PC-9 (cell line): ENCODE measurements at regions of chr16 and their contacts with region 1.

Region 1: DNA sequence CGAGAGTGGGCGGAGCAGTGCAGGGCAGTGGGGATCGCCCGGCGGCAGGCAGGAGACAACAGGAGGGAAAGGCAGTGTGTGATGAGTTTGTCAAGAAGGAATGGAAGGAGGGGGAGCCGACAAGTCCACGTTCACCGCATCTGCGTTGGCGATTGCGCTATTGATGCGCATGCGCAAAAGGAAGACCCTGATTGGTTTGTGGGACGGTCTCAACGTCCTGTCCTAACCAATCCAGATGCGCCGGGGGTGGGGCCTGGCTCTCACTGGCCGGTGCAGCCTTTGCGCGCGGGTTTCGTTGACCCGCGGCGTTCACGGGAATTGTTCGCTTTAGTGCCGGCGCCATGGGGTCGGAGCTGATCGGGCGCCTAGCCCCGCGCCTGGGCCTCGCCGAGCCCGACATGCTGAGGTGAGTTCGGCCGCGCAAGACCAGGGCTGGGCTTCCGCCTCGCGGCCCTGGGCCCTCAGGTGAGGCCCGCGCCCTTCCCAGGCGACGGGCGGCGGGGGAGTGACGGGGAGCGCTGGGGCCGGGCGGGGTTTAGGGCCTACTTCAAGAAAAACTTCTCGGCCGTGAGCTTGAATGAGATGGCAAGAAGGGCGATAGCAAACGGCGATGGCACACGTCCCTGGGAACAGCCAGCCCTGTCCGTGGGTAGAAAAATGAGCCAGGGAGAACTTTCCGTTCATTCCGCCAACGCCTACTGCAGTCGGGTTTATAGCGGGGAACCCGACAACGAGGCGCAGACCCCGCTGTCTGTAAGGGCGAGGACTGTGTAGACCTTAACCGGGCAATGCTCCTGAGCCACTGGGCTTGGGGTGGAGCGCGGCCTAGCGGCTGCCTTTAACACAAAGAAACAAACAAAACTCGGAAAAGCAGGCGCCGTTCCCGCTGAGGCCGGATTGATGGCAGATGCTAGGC is at the start of gene ORC6:
- DNase-seq: peak; percentile 90 to 95
- H3K4me3 ChIP-seq: peak within 1 kb of the TSS; percentile 73
- H3K27ac ChIP-seq: peak within 1 kb of the TSS; percentile 74
- H3K4me1 ChIP-seq: peaks cover 34% of the 10 kb centered on the region
- H3K27me3 ChIP-seq: no peaks in the 10 kb centered on the region
- CTCF ChIP-seq: peak; percentile 61; the same call in 1 of the 2 replicates
- total RNA-seq, gene ORC6: 27.4 and 36.0 TPM in 2 replicates

Region 2: GRCh38 chr16:46757339-46758050 is 67.9 kb after region 1 on chr16:
- CTCF ChIA-PET with region 1: no interaction called
- POLR2A ChIA-PET with region 1: no interaction called
- intact Hi-C with region 1: loop called (anchors 5 kb)
- DNase-seq: peak in 1 of 2 experiments; percentile 75
- H3K4me3 ChIP-seq: no peak overlapping the region
- H3K27ac ChIP-seq: no peak overlapping the region
- H3K4me1 ChIP-seq: peaks cover 4% of the 10 kb centered on the region; the same call in 1 of the 2 replicates
- H3K27me3 ChIP-seq: peaks cover 19% of the 10 kb centered on the region; the same call in 1 of the 2 replicates
- CTCF ChIP-seq: no peak

Region 3: GRCh38 chr16:46801428-46802049 is 111.9 kb after region 1 on chr16:
- CTCF ChIA-PET with region 1: interaction called, 4 read pairs
- POLR2A ChIA-PET with region 1: no interaction called
- intact Hi-C with region 1: loop called (anchors 5 kb)
- DNase-seq: no peak
- H3K4me3 ChIP-seq: no peak overlapping the region
- H3K27ac ChIP-seq: no peak overlapping the region
- H3K4me1 ChIP-seq: no peaks in the 10 kb centered on the region
- H3K27me3 ChIP-seq: no peaks in the 10 kb centered on the region
- CTCF ChIP-seq: peak; percentile 68

Region 4: GRCh38 chr16:46830902-46831647 is 141.5 kb after region 1 on chr16 and contains the start of gene C16orf87:
- CTCF ChIA-PET with region 1: no interaction called
- POLR2A ChIA-PET with region 1: interaction called, 23 read pairs
- intact Hi-C with region 1: loop called (anchors 1 kb)
- DNase-seq: peak; percentile 79 to 91
- H3K4me3 ChIP-seq: peak within 1 kb of the TSS; percentile 60
- H3K27ac ChIP-seq: peak within 1 kb of the TSS; percentile 26
- H3K4me1 ChIP-seq: peaks cover 17% of the 10 kb centered on the region; the same call in 1 of the 2 replicates
- H3K27me3 ChIP-seq: no peaks in the 10 kb centered on the region
- CTCF ChIP-seq: no peak
- total RNA-seq, gene C16orf87: 7.8 and 8.6 TPM in 2 replicates

Region 5: DNA sequence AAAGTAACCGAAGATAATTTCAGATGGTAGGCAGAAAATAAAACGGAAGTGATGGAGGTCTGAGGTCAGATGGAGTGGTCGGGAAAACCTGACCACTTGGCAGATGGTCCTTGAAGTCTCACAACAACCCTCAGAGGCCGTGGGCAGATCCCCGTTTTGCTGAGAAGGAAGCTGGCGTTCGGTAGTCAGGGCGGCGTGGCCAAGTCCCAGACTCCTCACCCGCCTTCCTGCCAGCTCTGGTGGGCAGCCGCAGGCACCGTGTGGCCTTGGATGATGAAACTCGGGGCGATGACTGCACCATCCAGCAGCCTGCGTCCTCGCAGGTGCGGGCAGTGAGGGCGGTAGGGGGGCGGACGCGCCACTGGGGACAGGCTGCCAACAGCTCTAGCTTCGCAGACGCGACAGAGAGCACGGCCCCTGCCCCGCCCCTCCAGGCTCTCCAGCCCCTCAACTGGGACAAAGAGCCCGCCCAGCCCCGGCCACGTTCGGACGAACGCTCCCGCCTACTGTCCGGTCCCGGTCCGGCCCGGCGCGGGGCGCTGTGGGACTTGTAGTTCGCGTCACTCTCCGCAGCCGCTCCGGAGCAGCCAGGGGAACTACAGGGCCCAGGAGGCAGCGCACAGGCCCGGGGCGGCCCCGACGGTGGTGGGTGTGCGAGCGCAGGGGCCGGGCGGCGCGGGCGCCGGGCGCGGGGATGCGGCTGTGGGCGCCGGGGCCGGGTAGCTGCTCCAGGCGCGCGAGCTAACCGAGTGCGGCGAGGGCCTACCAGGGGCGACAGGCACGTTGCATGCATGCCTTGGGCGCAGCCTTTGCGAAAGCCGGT is 194.3 kb after region 1 on chr16 and contains the start of gene GPT2:
- CTCF ChIA-PET with region 1: no interaction called
- POLR2A ChIA-PET with region 1: no interaction called
- intact Hi-C with region 1: loop called (anchors 2 kb)
- DNase-seq: peak; percentile 91 to 99
- H3K4me3 ChIP-seq: peak within 1 kb of the TSS; percentile 82
- H3K27ac ChIP-seq: peak within 1 kb of the TSS; percentile 96
- H3K4me1 ChIP-seq: peaks cover 27% of the 10 kb centered on the region
- H3K27me3 ChIP-seq: no peaks in the 10 kb centered on the region
- CTCF ChIP-seq: no peak; the same call in 1 of the 2 replicates
- total RNA-seq, gene GPT2: 52.8 and 67.2 TPM in 2 replicates